ENCODE measurements at regions of chr16 and their contacts with region 1.

Region 1: GRCh38 chr16:81314603-81315270 is at the start of gene GAN:
- DNase-seq: peak; percentile 97
- H3K4me3 Mint-ChIP-seq: peak within 1 kb of the TSS; percentile 95
- H3K27ac Mint-ChIP-seq: peak within 1 kb of the TSS; percentile 80
- H3K4me1 Mint-ChIP-seq: peaks cover 57% of the 10 kb centered on the region
- H3K27me3 Mint-ChIP-seq: no peaks in the 10 kb centered on the region
- CTCF ChIP-seq: no peak
- total RNA-seq, gene GAN: 17.6 and 22.0 TPM in 2 replicates

Region 2: GRCh38 chr16:81214745-81215166 is 100.0 kb before region 1 on chr16:
- CTCF ChIA-PET with region 1: no interaction called
- intact Hi-C with region 1: loop called (anchors 10 kb)
- DNase-seq: peak; percentile 70
- H3K4me3 Mint-ChIP-seq: no peak overlapping the region
- H3K27ac Mint-ChIP-seq: no peak overlapping the region
- H3K4me1 Mint-ChIP-seq: no peaks in the 10 kb centered on the region
- H3K27me3 Mint-ChIP-seq: peaks cover 9% of the 10 kb centered on the region
- CTCF ChIP-seq: no peak

Region 3: DNA sequence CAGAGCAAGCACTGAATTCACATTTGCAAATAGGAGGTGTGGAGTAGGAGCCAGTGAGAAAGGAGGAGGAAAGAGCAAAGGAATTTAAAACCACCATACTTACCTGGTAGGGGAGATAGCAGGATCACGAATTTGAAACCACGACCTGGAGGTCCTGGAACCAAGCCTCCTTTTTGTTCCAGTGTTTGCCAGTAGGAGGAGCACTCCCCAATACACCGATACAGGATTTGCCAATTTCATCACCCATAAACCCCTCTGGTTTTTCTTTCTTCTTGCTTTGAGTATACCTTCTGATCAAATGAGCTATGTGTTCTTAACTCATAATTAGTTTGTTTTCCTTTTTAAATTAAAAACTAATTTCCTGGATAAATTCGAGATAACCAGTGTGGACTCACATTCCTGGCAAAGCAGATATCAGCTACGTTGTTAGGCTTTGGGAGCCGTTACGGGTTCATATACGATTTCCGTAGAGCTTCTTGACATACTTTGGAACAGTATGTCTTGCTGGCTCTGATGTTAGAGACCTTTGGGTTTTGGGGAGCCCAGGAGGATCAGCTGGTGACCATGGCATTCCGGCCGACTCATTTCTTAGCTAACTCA is 53.6 kb before region 1 on chr16:
- CTCF ChIA-PET with region 1: interaction called, 3 read pairs
- intact Hi-C with region 1: loop called (anchors 5 kb)
- DNase-seq: peak; percentile 58
- H3K4me3 Mint-ChIP-seq: no peak overlapping the region
- H3K27ac Mint-ChIP-seq: no peak overlapping the region
- H3K4me1 Mint-ChIP-seq: peaks cover under 1% of the 10 kb centered on the region
- H3K27me3 Mint-ChIP-seq: no peaks in the 10 kb centered on the region
- CTCF ChIP-seq: peak; percentile 81

Region 4: DNA sequence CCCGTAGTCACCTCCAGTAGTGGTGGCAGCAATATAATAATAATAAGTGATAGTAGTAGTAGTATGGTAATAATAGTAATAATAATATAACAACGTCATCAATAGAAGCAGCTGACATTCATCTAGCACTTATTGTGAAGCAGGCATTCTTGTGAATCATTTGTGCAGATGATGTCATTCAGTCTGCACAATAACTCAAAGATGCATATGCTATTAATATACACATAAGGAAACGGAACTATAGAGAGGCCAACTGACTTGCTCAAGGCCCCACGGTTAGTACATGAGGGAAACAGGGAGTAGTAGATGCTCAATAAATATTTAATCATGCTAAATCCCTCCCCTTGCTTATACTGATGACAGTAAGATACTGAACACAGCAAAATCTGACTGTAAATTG is 35.3 kb before region 1 on chr16:
- CTCF ChIA-PET with region 1: interaction called, 3 read pairs
- intact Hi-C with region 1: loop called (anchors 5 kb)
- DNase-seq: no peak
- H3K4me3 Mint-ChIP-seq: no peak overlapping the region
- H3K27ac Mint-ChIP-seq: no peak overlapping the region
- H3K4me1 Mint-ChIP-seq: peaks cover 14% of the 10 kb centered on the region
- H3K27me3 Mint-ChIP-seq: no peaks in the 10 kb centered on the region
- CTCF ChIP-seq: no peak

Region 5: GRCh38 chr16:81293909-81294823 is 20.6 kb before region 1 on chr16:
- CTCF ChIA-PET with region 1: no interaction called
- intact Hi-C with region 1: loop called (anchors 1 kb)
- DNase-seq: no peak
- H3K4me3 Mint-ChIP-seq: peak overlapping the region; percentile 52
- H3K27ac Mint-ChIP-seq: peak overlapping the region; percentile 83
- H3K4me1 Mint-ChIP-seq: peaks cover 23% of the 10 kb centered on the region
- H3K27me3 Mint-ChIP-seq: no peaks in the 10 kb centered on the region
- CTCF ChIP-seq: no peak